Activated naive CD4-positive, alpha-beta T cell treated with anti-CD3 and anti-CD28 coated beads for 36 hours (primary cell): ENCODE measurements at regions of chr17 and their contacts with region 1.

Region 1: GRCh38 chr17:60525685-60526514 is at the start of gene APPBP2:
- DNase-seq: peak; percentile 81
- H3K4me3 Mint-ChIP-seq: peak within 1 kb of the TSS; percentile 96
- H3K27ac Mint-ChIP-seq: peak within 1 kb of the TSS; percentile 93
- H3K4me1 Mint-ChIP-seq: peaks cover 27% of the 10 kb centered on the region
- H3K27me3 Mint-ChIP-seq: no peaks in the 10 kb centered on the region
- total RNA-seq, gene APPBP2: 16.5 to 22.3 TPM

Region 2: DNA sequence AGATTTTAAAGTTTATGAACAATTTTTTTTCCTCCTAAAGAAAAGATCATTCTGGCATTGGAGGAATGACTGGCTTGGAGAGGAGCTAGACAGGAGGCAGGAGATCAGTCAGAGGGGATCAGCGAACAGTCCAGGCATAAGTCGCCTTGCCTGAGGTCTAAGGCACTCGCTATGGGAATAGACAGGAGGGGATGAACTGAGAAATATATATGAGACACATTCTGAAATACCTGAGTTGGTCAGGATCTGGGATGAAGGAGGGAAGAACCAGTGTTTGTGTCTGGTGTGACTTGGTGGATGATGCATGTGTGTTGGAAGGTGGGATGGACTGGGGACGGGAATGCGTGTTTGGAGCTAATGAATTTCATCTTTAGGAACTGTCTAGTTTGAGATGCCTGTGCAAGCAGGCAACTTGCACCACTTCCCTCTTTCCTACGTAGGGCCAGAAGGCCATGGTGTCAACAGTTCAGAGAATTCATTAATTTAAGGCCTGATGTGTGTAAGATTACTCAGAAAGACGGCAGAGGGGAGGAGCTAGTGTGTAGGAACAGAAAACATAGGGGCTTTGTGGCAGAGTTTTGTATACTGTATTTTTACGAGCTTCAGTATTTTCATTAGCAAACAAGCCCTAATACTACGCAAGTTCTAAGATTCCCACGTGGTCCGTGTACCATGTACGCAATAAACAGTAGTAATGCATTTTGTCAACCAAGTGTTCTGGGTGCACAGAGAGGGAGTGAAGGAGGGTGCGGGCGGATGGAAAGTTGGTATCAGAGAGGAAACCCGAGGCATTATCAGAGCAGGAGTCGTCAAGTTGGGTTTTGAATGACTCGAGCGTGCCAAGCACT is 448.0 kb before region 1 on chr17:
- CTCF ChIA-PET with region 1: no interaction called
- intact Hi-C with region 1: loop called (anchors 2 kb)
- DNase-seq: peak; percentile 49
- H3K4me3 Mint-ChIP-seq: peak overlapping the region; percentile 85
- H3K27ac Mint-ChIP-seq: peak overlapping the region; percentile 82
- H3K4me1 Mint-ChIP-seq: peaks cover 20% of the 10 kb centered on the region
- H3K27me3 Mint-ChIP-seq: peaks cover 2% of the 10 kb centered on the region

Region 3: GRCh38 chr17:60356940-60357339 is 169.0 kb before region 1 on chr17:
- CTCF ChIA-PET with region 1: no interaction called
- intact Hi-C with region 1: loop called (anchors 5 kb)
- DNase-seq: peak; percentile 16
- H3K4me3 Mint-ChIP-seq: no peak overlapping the region
- H3K27ac Mint-ChIP-seq: no peak overlapping the region
- H3K4me1 Mint-ChIP-seq: peaks cover 36% of the 10 kb centered on the region
- H3K27me3 Mint-ChIP-seq: no peaks in the 10 kb centered on the region

Region 4: GRCh38 chr17:60508384-60508970 is 17.4 kb before region 1 on chr17:
- CTCF ChIA-PET with region 1: no interaction called
- intact Hi-C with region 1: loop called (anchors 1 kb)
- DNase-seq: no peak
- H3K4me3 Mint-ChIP-seq: no peak overlapping the region
- H3K27ac Mint-ChIP-seq: peak overlapping the region; percentile 9
- H3K4me1 Mint-ChIP-seq: peaks cover 32% of the 10 kb centered on the region
- H3K27me3 Mint-ChIP-seq: no peaks in the 10 kb centered on the region

Region 5: DNA sequence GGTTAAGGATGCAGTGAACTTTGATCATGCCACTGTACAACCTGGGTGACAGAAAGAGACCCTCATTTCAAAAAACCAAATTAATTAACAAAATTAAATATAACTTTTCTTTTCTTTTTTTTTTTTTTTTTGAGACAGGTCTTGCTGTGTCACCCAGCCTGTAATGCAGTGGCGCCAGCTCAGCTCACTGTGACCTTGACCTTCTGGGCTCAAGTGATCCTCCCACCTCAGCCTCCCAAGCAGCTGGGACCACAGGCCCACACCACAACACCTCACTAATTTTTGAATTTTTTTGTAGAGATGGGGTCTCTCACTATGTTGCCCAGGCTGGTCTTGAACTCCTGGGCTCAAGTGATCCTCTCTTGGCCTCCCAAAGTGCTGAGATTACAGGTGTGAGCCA is 42.7 kb after region 1 on chr17:
- CTCF ChIA-PET with region 1: interaction called, 3 read pairs
- intact Hi-C with region 1: loop called (anchors 2 kb)
- DNase-seq: no peak
- H3K4me3 Mint-ChIP-seq: no peak overlapping the region
- H3K27ac Mint-ChIP-seq: no peak overlapping the region
- H3K4me1 Mint-ChIP-seq: no peaks in the 10 kb centered on the region
- H3K27me3 Mint-ChIP-seq: no peaks in the 10 kb centered on the region

Region 6: DNA sequence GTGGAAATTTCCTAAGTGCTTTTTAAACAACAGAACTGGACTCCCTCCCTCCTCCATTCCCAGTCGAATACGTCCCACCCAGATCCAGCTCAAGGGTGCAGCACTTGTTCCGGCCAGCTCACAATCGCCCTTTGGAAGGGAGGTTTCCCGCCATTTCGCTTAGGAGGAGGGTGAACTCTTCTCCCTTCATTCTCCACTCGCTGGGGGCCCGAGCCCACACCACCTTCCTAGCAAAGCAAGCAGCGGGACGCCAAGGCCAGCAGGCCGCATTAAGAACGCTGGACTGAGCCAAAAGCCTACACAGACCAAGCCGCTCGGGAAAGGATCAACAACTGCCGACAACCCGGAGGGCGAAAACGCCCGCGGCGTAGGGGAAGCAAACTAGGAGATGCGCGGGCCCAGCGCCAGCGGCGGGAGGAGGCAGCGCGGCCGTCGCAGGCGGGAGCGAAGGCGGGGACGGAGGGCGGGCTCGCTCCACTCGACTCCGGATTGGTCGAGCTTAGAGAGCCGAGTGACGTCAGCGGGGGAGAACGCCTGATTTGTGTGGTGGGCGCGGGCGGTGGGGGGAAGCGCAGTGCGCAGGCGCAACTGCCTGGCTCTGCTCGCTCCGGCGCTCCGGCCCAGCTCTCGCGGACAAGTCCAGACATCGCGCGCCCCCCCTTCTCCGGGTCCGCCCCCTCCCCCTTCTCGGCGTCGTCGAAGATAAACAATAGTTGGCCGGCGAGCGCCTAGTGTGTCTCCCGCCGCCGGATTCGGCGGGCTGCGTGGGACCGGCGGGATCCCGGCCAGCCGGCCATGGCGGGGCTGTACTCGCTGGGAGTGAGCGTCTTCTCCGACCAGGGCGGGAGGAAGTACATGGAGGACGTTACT is 74.0 kb after region 1 on chr17 and contains the start of gene PPM1D:
- CTCF ChIA-PET with region 1: no interaction called
- intact Hi-C with region 1: loop called (anchors 1 kb)
- DNase-seq: peak; percentile 99
- H3K4me3 Mint-ChIP-seq: peak within 1 kb of the TSS; percentile 93
- H3K27ac Mint-ChIP-seq: peak within 1 kb of the TSS; percentile 95
- H3K4me1 Mint-ChIP-seq: peaks cover 30% of the 10 kb centered on the region
- H3K27me3 Mint-ChIP-seq: no peaks in the 10 kb centered on the region
- total RNA-seq, gene PPM1D: 11.8 to 13.1 TPM

Region 7: GRCh38 chr17:60677308-60678124 is 151.6 kb after region 1 on chr17 and contains the start of gene BCAS3:
- CTCF ChIA-PET with region 1: no interaction called
- intact Hi-C with region 1: loop called (anchors 1 kb)
- DNase-seq: peak; percentile 99
- H3K4me3 Mint-ChIP-seq: peak within 1 kb of the TSS; percentile 91
- H3K27ac Mint-ChIP-seq: peak within 1 kb of the TSS; percentile 79
- H3K4me1 Mint-ChIP-seq: peaks cover 11% of the 10 kb centered on the region
- H3K27me3 Mint-ChIP-seq: no peaks in the 10 kb centered on the region
- total RNA-seq, gene BCAS3: 7.2 to 7.5 TPM

Region 8: GRCh38 chr17:60772911-60773310 is 247.0 kb after region 1 on chr17:
- CTCF ChIA-PET with region 1: no interaction called
- intact Hi-C with region 1: no loop called
- DNase-seq: no peak
- H3K4me3 Mint-ChIP-seq: no peak overlapping the region
- H3K27ac Mint-ChIP-seq: no peak overlapping the region
- H3K4me1 Mint-ChIP-seq: peaks cover 2% of the 10 kb centered on the region
- H3K27me3 Mint-ChIP-seq: no peaks in the 10 kb centered on the region